ENCODE measurements at regions of chr10 and their contacts with region 1.

Region 1: GRCh38 chr10:18615618-18616017 is 35.8 kb downstream of the NSUN6 start:
- DNase-seq: peak; percentile 47
- H3K4me3 Mint-ChIP-seq: no peak overlapping the region
- H3K27ac Mint-ChIP-seq: no peak overlapping the region
- H3K4me1 Mint-ChIP-seq: peaks cover 22% of the 10 kb centered on the region
- H3K27me3 Mint-ChIP-seq: no peaks in the 10 kb centered on the region
- CTCF ChIP-seq: no peak

Region 2: DNA sequence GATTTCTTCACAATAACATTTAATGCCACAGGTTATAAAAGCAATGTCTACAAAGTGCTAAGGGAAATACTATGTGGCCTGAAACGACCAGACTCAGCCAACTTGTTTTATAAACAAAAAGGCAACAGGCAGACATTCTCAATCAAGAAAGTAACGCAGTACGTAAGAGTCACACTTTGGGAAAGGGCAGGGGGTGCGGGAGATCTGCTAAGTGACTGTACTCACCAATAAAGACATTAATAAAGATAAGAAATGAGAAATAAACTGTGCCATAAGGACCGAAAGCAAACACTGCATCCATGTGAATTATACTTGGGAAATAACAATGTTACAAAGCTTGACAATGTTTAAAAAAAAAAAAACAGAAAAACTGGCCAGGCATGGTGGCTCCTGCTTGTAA is 10.3 kb after region 1 on chr10:
- CTCF ChIA-PET with region 1: interaction called, 3 read pairs
- POLR2A ChIA-PET with region 1: interaction called, 10 read pairs
- intact Hi-C with region 1: no loop called
- DNase-seq: no peak
- H3K4me3 Mint-ChIP-seq: no peak overlapping the region
- H3K27ac Mint-ChIP-seq: no peak overlapping the region
- H3K4me1 Mint-ChIP-seq: peaks cover 5% of the 10 kb centered on the region
- H3K27me3 Mint-ChIP-seq: no peaks in the 10 kb centered on the region
- CTCF ChIP-seq: no peak

Region 3: DNA sequence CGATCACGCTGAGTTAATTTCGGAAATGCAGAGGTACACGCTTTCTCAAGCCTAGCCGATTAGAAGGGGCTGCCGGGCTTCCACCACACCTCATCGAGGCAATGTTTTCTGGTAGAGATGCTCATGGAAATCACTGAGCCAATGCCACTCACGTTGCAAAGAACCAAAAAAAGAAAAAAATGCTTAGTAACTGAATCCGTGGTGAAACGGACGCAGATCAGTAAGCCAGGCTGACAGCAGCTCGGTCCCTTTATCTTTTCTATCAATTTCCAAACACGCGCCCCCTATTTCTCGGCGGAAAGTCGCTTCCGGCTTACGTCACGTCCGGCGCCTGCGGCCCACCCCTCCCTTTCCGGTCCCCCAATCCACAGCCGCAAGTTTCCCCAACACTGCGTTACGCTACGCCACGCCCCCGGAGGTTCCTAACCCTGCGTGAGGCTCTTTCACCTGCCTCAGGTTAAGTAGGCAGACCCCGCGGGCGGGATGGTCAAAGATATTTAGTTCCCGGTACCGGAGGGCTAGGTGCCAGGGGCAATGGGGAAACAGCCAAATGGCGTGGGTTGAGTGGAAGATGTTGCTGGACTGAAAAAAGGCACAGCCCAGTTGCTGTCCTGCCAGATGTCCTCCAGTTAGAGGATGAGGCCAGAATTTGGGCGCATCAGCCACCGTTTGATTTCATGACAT is 35.8 kb after region 1 on chr10 and contains the start of gene NSUN6:
- CTCF ChIA-PET with region 1: no interaction called
- POLR2A ChIA-PET with region 1: no interaction called
- intact Hi-C with region 1: no loop called
- DNase-seq: peak; percentile 85
- H3K4me3 Mint-ChIP-seq: peak within 1 kb of the TSS; percentile 94
- H3K27ac Mint-ChIP-seq: peak within 1 kb of the TSS; percentile 94
- H3K4me1 Mint-ChIP-seq: peaks cover 9% of the 10 kb centered on the region
- H3K27me3 Mint-ChIP-seq: no peaks in the 10 kb centered on the region
- CTCF ChIP-seq: no peak
- total RNA-seq, gene NSUN6: 16.0 and 16.2 TPM in 2 replicates

Measured in MCF 10A (cell line).